Left cardiac atrium (tissue), 4 donors: ENCODE measurements at regions of chr16 and their contacts with region 1.

Region 1: GRCh38 chr16:66406534-66407221 is 20.4 kb upstream of the BEAN1 start:
- DNase-seq: peak; percentile 91
- ATAC-seq: peak; percentile 86 to 89

Region 2: DNA sequence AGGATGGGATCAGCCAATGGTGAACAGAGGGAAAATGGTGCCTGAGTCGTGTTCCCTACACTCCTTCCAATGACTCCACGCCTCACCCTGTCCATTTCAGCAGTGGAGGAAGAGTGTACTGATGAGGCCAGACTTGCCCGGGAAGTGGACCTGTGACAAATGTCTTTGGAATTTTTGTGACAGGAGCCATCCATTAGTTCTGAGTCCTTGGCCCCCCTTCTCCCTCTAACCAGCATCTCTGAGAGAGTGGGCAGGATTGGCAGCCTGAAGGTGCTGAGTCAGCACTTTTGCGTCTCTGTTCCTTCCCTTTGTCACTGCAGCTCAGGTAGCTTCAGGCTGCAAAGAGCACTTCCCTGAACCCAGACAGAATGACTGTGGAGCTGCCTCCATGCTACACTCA is 51.2 kb after region 1 on chr16:
- intact Hi-C with region 1: no loop called
- DNase-seq: no peak
- ATAC-seq: no peak

Region 3: DNA sequence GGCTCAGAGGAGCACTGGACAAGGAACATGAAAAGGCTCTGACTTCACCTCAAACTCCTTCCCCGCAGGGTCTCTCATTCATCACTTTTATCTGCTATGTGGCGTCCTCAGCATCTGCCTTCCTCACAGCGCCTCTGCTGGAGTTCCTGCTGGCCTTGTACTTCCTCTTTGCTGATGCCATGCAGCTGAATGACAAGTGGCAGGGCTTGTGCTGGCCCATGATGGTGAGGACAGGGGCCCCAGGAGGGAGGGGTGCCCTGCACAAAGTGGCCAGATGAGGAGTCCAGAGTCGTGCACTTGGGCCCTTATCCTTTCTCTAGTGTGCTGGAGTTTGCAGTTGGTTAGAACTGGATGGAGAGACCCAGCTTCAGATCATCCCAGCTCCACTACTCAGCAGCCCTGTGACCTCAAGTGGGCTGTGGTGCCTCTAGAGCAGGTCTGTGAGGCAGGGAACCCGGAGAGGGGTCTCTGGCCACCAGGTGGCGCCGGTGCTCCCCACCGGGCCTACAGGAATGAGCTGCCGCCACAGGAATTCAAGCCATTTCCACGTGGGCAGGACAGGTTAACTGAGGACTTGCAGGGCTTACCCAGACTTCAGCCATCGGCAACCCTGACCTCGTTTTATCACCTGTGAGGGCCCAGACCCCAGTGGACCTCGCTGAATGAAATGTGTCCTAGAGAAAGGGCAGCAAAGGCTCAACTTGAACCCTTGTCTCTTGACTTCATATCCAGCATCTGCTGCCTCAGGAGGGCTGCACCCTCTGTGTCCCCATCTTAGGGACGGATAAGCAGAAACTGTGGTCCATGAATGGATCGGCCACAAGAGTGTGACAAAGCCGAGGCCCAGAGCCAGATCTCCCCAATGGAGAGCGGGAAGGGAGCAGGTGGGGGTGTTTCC is 201.8 kb after region 1 on chr16:
- intact Hi-C with region 1: loop called (anchors 10 kb)
- DNase-seq: peak; percentile 90
- ATAC-seq: peak; percentile 35 to 39